ENCODE measurements at regions of chr5 and their contacts with region 1.

Region 1: DNA sequence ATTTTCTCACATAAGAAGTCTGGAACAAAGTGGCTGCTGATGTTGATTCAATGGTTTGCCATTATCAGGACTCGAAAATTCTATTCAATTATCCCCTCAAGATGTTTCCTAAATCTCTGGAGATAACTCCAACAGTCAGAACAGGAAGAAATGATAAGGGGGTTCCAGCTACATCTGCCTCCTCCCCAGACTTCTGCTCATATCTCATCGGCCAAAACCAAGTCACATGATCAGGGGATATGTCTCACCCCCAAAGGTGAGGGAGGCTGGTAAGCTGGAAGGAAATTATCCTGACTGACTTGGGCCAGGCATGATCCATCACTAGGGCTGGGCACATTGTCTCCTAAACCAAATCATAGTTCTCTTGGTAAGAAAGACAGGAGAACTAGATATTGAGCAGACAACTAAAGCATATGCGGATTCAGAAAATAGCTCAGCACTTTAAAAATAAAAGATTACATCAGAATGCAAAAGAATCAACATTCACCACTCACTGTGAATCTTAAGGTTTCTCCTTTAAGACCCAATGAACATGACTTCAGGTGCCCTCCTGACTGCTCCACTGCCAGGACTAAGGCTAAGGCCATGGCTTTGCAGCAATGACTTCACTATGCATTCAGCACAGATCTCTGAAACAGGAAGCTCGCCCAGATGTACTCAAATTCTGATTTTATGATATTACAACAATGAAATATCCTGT is 306.3 kb downstream of the ENC1 start:
- DNase-seq: no peak
- ATAC-seq: no peak
- H3K4me3 ChIP-seq: no peak overlapping the region
- H3K27ac ChIP-seq: no peak overlapping the region
- H3K4me1 ChIP-seq: no peaks in the 10 kb centered on the region
- H3K27me3 ChIP-seq: peaks cover 26% of the 10 kb centered on the region; the same call in 1 of the 2 replicates
- CTCF ChIP-seq: no peak
- POLR2A ChIP-seq: no peak
- RAD21 ChIP-seq: no peak

Region 2: DNA sequence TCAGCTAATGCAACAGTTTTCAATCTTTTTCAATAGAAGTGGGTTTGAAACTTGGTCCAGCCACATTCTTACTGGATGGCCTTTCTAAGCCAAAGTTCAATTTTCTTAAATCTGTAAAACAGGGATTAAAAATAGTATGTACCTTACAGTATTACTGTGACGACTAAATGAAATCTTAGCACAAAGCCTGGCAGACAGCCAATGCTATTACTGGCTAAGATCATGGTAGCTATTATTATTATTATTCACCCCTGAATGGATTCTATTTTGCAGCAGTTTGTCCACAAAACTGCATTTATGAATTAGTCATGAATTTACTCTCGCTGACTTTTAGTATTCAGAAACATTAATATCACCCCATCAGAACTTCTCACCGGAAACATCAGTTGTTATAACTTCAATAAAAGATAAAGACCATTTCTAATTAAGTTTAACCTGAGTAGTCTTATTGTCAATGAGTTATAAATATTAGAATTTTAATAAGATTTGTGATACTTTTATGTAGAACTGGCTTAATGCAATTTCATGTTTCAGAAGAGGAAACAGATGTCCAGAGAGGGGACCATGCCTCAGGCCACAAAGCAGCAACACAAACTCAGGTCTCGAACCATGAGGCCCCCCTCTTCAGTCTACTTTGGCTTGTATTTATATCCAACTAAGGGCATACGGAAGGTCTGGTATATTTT is 240.0 kb before region 1 on chr5:
- CTCF ChIA-PET with region 1: no interaction called
- POLR2A ChIA-PET with region 1: no interaction called
- RAD21 ChIA-PET with region 1: no interaction called
- intact Hi-C with region 1: no loop called
- DNase-seq: no peak
- ATAC-seq: no peak
- H3K4me3 ChIP-seq: no peak overlapping the region
- H3K27ac ChIP-seq: no peak overlapping the region
- H3K4me1 ChIP-seq: no peaks in the 10 kb centered on the region
- H3K27me3 ChIP-seq: no peaks in the 10 kb centered on the region
- CTCF ChIP-seq: no peak
- POLR2A ChIP-seq: no peak
- RAD21 ChIP-seq: no peak

Region 3: DNA sequence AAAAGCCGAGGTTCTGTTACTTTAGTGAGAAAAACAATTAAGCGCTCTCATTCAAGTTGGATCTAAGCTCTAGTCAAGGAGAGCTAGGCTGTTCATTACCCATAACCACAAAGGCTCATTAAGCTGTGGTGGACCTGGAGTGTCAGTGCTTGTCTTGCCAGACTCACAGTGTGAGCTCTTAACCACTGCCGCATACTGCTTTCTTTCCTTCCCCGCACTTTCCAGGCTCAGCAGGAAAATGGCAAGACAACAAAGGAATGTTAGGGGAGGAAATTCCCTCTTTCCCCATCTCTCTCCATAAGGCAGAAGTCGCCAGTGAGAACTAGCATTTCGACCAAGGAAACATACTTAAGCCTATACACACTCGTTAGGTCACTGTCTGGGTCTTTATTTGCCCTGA is 161.0 kb before region 1 on chr5:
- CTCF ChIA-PET with region 1: no interaction called
- POLR2A ChIA-PET with region 1: no interaction called
- RAD21 ChIA-PET with region 1: no interaction called
- intact Hi-C with region 1: no loop called
- DNase-seq: no peak
- ATAC-seq: no peak
- H3K4me3 ChIP-seq: no peak overlapping the region
- H3K27ac ChIP-seq: no peak overlapping the region
- H3K4me1 ChIP-seq: no peaks in the 10 kb centered on the region
- H3K27me3 ChIP-seq: no peaks in the 10 kb centered on the region
- CTCF ChIP-seq: no peak
- POLR2A ChIP-seq: no peak
- RAD21 ChIP-seq: no peak

Region 4: DNA sequence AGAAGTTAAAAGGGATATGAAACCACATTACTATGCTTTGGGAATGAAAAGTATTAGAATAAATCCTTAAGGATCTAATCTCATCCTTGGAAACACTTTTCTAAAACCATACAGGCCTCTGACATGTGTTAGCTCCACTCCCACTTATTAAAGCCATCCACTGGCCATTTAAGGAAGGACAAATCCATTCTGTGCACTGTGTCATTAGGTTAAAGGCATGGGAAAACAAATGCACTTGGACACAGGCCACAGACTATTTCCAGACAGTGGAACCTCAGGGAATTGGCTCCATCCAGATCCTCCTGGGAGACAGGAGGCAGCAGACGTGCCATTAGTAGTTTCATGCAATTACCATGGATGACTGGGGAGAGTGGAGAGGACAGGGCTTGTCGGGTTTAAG is 148.6 kb before region 1 on chr5:
- CTCF ChIA-PET with region 1: no interaction called
- POLR2A ChIA-PET with region 1: no interaction called
- RAD21 ChIA-PET with region 1: no interaction called
- intact Hi-C with region 1: no loop called
- DNase-seq: no peak
- ATAC-seq: no peak
- H3K4me3 ChIP-seq: no peak overlapping the region
- H3K27ac ChIP-seq: no peak overlapping the region
- H3K4me1 ChIP-seq: no peaks in the 10 kb centered on the region
- H3K27me3 ChIP-seq: no peaks in the 10 kb centered on the region
- CTCF ChIP-seq: no peak
- POLR2A ChIP-seq: no peak
- RAD21 ChIP-seq: no peak

Region 5: DNA sequence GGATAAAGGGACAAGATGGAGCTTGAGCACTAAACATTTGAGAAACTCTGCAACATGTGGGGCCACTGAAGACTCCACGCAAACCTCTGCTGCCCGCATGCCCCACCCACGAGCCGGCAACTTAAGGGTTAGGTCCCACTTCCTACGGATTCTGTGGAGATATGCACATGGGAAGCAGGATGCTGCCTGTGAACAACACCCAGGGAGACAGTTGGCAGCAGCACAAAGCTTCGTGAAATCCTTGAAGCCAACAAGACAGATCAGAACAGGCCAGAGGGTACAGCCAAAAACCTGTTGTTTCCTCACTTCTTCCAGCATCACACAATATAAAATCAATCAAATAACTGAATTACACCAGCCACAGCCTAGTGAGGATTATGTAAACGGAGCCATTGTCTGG is 36.0 kb after region 1 on chr5:
- CTCF ChIA-PET with region 1: no interaction called
- POLR2A ChIA-PET with region 1: no interaction called
- RAD21 ChIA-PET with region 1: no interaction called
- intact Hi-C with region 1: loop called (anchors 1 kb)
- DNase-seq: no peak
- ATAC-seq: no peak
- H3K4me3 ChIP-seq: no peak overlapping the region
- H3K27ac ChIP-seq: no peak overlapping the region
- H3K4me1 ChIP-seq: no peaks in the 10 kb centered on the region
- H3K27me3 ChIP-seq: no peaks in the 10 kb centered on the region
- CTCF ChIP-seq: no peak
- POLR2A ChIP-seq: no peak
- RAD21 ChIP-seq: no peak